Calu3 (cell line): ENCODE measurements at regions of chr10 and their contacts with region 1.

Region 1: DNA sequence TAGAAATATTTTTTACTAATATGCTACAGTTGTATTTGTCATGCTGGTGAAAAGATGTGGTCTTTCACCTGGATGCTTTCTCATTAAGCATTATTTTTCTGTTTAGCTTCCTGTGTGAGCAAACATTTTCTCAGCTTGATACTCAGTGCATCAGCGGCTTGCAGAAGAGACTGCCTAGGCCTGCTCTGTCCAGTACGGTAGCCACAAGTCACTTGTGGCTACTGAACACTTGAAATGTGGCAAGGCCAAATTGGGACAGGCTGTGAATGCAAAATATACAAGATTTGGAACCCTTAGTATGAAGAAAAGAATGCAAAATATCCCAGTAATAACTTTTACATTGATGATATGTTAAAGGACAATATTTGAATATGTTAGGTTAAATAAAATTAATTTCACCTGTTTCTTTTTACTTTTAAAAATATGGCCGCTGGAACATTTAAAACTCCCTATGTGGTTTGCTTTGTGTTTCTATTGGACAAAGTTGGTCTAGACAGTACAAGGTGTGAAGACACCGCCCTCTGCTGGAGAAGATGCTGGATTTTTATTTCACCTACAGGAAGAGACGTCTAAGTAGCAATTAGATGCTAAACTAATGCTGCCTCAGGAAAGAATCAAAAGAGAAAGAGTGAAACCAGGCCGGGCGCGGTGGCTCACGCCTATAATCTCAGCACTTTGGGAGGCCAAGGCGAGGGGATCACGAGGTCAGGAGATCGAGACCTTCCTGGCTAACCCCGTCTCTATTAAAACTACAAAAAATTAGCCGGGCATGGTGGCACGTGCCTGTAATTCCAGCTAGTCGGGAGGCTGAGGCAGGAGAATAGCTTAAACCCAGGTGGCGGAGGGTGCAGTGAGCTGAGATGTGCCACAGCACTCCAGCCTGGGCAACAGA is 5.3 kb downstream of the SRGN start:
- DNase-seq: peak; percentile 87
- H3K4me3 Mint-ChIP-seq: no peak overlapping the region
- H3K27ac Mint-ChIP-seq: peak overlapping the region; percentile 8
- H3K4me1 Mint-ChIP-seq: no peaks in the 10 kb centered on the region
- H3K27me3 Mint-ChIP-seq: no peaks in the 10 kb centered on the region
- CTCF ChIP-seq: peak; percentile 67

Region 2: DNA sequence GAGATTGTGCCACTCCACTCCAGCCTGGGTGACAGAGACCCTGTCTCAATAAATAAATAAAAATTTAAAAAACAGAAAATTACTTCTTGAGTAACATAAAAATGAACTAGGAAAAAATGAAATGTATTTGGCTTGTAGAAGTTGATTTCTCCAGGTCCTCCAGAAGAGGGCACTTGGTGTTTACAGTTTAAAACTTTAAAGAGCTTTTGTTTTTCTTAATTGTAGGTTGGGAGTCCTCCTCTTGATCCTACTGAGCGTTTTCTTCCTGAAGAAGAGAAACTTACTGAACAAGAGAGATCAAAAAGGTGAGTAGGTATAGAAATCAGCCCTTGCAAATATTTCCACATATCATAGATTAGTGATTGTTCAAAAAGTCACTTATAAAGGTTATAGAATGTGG is 88.4 kb before region 1 on chr10:
- CTCF ChIA-PET with region 1: interaction called, 45 read pairs
- intact Hi-C with region 1: loop called (anchors 1 kb)
- DNase-seq: no peak
- H3K4me3 Mint-ChIP-seq: no peak overlapping the region
- H3K27ac Mint-ChIP-seq: no peak overlapping the region
- H3K4me1 Mint-ChIP-seq: no peaks in the 10 kb centered on the region
- H3K27me3 Mint-ChIP-seq: no peaks in the 10 kb centered on the region
- CTCF ChIP-seq: peak; percentile 41

Region 3: GRCh38 chr10:69061305-69062161 is 31.7 kb before region 1 on chr10:
- CTCF ChIA-PET with region 1: interaction called, 3 read pairs
- intact Hi-C with region 1: loop called (anchors 2 kb)
- DNase-seq: peak; percentile 66
- H3K4me3 Mint-ChIP-seq: peak overlapping the region; percentile 68
- H3K27ac Mint-ChIP-seq: peak overlapping the region; percentile 90
- H3K4me1 Mint-ChIP-seq: peaks cover 41% of the 10 kb centered on the region
- H3K27me3 Mint-ChIP-seq: no peaks in the 10 kb centered on the region
- CTCF ChIP-seq: no peak

Region 4: DNA sequence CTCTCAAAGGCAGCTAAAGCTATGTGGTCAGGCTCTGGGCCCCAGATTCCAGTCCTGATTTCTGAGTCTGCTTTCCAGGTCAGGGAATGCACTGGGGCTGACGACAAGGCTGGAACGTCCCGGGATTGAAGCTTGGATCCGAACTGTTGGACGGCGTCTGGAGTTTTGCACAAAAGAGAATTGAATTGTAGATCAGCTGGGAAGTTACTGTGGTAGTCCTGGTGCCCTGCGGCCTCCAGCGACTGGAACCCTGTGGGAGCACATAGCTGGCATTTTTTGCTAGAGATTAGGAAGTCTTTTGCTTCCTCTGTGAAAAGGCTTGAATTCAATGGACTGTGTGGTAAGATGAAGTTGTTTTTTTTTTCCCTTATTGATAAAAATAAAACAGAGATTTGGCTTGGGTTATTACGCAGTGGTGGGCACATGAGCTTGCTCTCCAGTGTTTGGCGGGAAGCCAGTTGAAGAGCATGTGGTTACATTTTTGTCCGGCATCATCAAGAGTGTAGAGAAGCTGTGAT is 185.3 kb after region 1 on chr10 and contains the start of gene HK1:
- CTCF ChIA-PET with region 1: no interaction called
- intact Hi-C with region 1: no loop called
- DNase-seq: no peak
- H3K4me3 Mint-ChIP-seq: no peak within 1 kb of the TSS
- H3K27ac Mint-ChIP-seq: no peak within 1 kb of the TSS
- H3K4me1 Mint-ChIP-seq: no peaks in the 10 kb centered on the region
- H3K27me3 Mint-ChIP-seq: no peaks in the 10 kb centered on the region
- CTCF ChIP-seq: no peak
- total RNA-seq, gene HK1: 58.8 and 61.0 TPM in 2 replicates